Lower leg skin (tissue), 4 donors: ENCODE measurements at regions of chrX and their contacts with region 1.

Region 1: GRCh38 chrX:53471346-53471745 is 37.2 kb upstream of the HSD17B10 start:
- DNase-seq: no peak
- H3K4me3 ChIP-seq: no peak overlapping the region
- CTCF ChIP-seq: no peak
- POLR2A ChIP-seq: no peak

Region 2: GRCh38 chrX:53445977-53446376 is 25.4 kb before region 1 on chrX:
- intact Hi-C with region 1: loop called (anchors 1 kb)
- DNase-seq: no peak
- H3K4me3 ChIP-seq: no peak overlapping the region
- CTCF ChIP-seq: no peak
- POLR2A ChIP-seq: no peak

Region 3: DNA sequence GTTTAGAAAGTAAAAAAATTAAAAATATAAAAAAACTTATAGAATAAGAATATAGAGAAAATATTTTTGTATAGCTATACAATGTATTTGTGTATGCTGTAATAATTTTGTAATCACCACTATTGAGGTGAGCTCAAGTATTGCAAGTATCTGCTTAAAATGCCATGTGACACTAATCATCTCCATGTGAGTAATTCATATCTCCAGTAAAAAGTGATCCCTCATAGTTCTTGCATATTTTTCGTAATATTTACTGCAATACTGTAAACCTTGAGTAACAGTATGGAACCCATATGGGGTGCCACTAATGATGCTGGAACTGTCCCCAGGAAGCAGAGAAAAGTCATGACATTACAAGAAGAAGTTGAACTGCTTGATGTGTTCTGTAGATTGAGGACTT is 258.4 kb after region 1 on chrX:
- intact Hi-C with region 1: no loop called
- DNase-seq: no peak
- H3K4me3 ChIP-seq: no peak overlapping the region
- CTCF ChIP-seq: no peak
- POLR2A ChIP-seq: no peak